Left cardiac atrium (tissue), 4 donors: ENCODE measurements at regions of chr16 and their contacts with region 1.

Region 1: GRCh38 chr16:51982715-51983680 is 563.9 kb downstream of the TOX3 start:
- DNase-seq: no peak
- ATAC-seq: peak in 1 of 2 donors; percentile 61

Region 2: GRCh38 chr16:51773521-51773920 is 209.5 kb before region 1 on chr16:
- intact Hi-C with region 1: no loop called
- DNase-seq: no peak
- ATAC-seq: no peak

Region 3: DNA sequence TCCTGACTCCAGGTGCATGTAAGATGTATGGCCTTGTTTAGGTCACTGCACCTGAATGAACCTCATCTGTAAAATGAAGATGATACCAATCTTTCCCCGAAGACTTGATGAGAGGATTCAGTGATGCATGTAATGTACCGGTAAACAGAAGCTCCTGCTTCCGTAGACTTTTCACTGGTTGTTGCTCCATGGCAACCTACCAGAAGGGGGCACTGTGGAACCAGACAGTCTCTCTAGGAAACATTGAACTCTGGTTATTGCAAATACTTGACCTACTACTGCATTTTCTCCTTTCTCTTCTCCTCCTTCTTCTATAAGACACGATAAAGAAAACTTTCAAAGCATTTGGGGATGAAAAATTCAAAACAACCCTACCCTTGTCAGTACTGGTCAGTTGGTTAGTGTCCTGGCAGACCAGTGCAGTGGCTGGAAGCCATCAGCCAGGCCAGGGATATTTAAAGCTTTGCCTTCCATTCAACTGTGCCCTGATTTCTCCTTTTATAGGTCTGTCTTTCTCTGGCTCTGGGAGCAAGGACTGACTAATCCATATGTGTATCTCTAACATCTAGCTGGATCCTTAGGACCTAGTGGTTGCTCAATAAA is 164.6 kb before region 1 on chr16:
- intact Hi-C with region 1: loop called in 1 of 2 experiments (anchors 5 kb)
- DNase-seq: no peak
- ATAC-seq: no peak

Region 4: GRCh38 chr16:52035436-52035835 is 52.4 kb after region 1 on chr16:
- intact Hi-C with region 1: no loop called
- DNase-seq: no peak
- ATAC-seq: no peak